ENCODE measurements at regions of chr6 and their contacts with region 1.

Region 1: DNA sequence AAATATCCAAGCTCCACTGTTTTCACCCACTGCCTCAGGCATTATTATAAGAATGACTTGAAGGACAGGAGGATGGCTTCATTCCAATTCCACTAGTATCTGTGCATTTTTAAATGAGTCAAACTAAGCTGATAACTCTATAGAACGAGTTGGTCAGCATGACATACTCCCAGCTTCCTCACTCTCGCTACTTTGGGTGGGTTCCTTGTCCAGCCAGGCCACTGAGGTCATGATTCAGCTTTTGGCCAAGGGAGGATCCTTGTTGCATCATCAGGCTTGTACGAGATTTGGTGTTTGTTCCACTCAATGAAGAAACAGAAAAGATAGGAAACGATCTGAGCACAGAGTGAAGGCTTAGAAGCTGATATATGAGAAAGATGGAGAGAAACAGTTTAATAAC is 19.8 kb downstream of the NEDD9 start:
- DNase-seq: no peak
- ATAC-seq: peak; percentile 71

Region 2: GRCh38 chr6:10411971-10412745 is 800.5 kb before region 1 on chr6:
- intact Hi-C with region 1: no loop called
- DNase-seq: no peak
- ATAC-seq: peak; percentile 31

Region 3: GRCh38 chr6:11179419-11180202 is 33.0 kb before region 1 on chr6:
- intact Hi-C with region 1: loop called (anchors 5 kb)
- DNase-seq: no peak
- ATAC-seq: no peak

Region 4: GRCh38 chr6:11232193-11232769 is 19.7 kb after region 1 on chr6 and contains the start of gene NEDD9:
- intact Hi-C with region 1: loop called (anchors 2 kb)
- DNase-seq: peak; percentile 97
- ATAC-seq: peak; percentile 99
- total RNA-seq, gene NEDD9: 29.3 TPM

Region 5: GRCh38 chr6:11366183-11366933 is 153.7 kb after region 1 on chr6:
- intact Hi-C with region 1: loop called (anchors 5 kb)
- DNase-seq: no peak
- ATAC-seq: no peak